Mucosa of descending colon (tissue), 3 donors: ENCODE measurements at regions of chr7 and their contacts with region 1.

Region 1: GRCh38 chr7:135160098-135160857 is 10.2 kb downstream of the CYREN start:
- DNase-seq: no peak
- ATAC-seq: peak; percentile 62
- H3K4me3 ChIP-seq: no peak overlapping the region
- H3K4me1 ChIP-seq: no peaks in the 10 kb centered on the region
- CTCF ChIP-seq: no peak

Region 2: DNA sequence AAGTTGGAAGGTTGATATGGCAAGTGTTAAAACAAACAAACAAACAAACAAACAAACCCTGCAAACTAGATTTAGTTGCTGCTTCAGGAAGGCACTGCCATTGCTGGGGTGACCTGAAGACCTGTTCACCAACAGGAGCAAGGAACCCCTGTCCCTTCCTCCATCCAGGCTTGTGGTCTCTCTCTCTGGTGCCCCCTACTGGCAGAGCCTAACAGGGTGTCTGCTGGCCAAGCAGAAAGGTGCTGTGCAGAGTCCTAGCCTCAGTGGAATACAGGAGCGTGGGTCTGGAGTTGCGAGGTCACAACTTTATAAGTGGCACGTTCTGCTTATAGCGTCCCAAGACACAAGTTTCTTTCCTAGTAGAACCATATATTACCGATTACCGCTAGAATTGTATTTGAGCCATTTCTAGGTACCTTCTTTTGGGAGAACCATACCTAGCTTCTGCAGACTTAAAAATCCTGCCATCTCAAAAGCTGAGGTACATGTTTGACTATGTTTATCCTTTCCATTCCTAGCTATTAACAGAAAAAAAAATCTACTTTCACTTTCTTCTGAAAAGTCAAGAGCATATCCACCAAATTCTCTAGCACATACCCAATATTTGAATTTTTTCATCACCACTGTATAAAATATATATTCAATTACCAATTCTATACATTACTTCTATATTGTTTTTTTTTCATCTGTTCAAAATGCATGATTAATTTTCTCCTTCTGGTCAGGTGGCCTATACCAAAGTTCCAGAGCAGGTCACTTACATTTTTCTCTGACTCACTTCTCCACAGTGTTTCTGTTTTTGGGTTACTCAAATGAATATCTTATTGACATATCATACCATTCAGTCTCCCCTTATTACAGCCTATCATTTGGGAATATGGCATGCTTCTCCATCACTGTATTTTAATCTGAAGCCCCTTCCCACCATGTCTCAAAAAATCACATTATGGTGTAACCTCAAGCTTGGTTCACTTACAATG is 409.9 kb before region 1 on chr7:
- intact Hi-C with region 1: loop called in 1 of 2 experiments (anchors 5 kb)
- DNase-seq: peak in 2 of 3 donors; percentile 46 to 79
- ATAC-seq: peak; percentile 74
- H3K4me3 ChIP-seq: no peak overlapping the region
- H3K4me1 ChIP-seq: no peaks in the 10 kb centered on the region
- CTCF ChIP-seq: peak; percentile 58

Region 3: GRCh38 chr7:135362871-135363270 is 202.6 kb after region 1 on chr7:
- intact Hi-C with region 1: no loop called
- DNase-seq: no peak
- ATAC-seq: no peak
- H3K4me3 ChIP-seq: no peak overlapping the region
- H3K4me1 ChIP-seq: no peaks in the 10 kb centered on the region
- CTCF ChIP-seq: no peak